Activated CD4-positive, alpha-beta T cell treated with anti-CD3 and anti-CD28 coated beads for 36 hours (primary cell): ENCODE measurements at regions of chr17 and their contacts with region 1.

Region 1: GRCh38 chr17:30291543-30292285 is at the start of gene BLMH:
- DNase-seq: peak; percentile 90
- ATAC-seq: peak; percentile 82
- H3K4me3 Mint-ChIP-seq: peak within 1 kb of the TSS; percentile 91
- H3K27ac Mint-ChIP-seq: peak within 1 kb of the TSS; percentile 94
- H3K4me1 Mint-ChIP-seq: peaks cover 13% of the 10 kb centered on the region
- H3K27me3 Mint-ChIP-seq: no peaks in the 10 kb centered on the region
- total RNA-seq, gene BLMH: 54.3 to 74.5 TPM

Region 2: DNA sequence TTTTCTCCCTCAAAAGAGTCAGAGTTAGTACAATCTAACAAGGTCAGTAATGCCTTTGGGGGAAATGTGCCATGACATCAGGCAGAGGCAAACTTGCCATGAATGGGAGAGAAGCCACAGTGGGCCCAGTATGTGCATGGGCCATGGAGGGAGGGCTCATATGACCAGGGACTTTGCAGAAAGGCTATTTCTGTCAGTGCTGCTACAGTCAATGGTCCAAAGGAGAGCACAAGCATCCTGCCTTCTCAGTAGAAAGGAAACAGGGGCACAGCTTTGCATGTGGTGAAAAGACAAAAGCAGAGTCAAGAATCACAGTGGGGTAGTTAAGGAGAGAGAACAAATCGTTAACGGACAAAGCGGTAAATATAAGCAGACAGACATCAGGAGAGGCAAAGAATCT is 657.8 kb before region 1 on chr17:
- CTCF ChIA-PET with region 1: no interaction called
- POLR2A ChIA-PET with region 1: no interaction called
- intact Hi-C with region 1: no loop called
- DNase-seq: no peak
- ATAC-seq: no peak
- H3K4me3 Mint-ChIP-seq: no peak overlapping the region
- H3K27ac Mint-ChIP-seq: peak overlapping the region; percentile 45
- H3K4me1 Mint-ChIP-seq: peaks cover 16% of the 10 kb centered on the region
- H3K27me3 Mint-ChIP-seq: no peaks in the 10 kb centered on the region

Region 3: GRCh38 chr17:30252940-30253717 is 38.6 kb before region 1 on chr17:
- CTCF ChIA-PET with region 1: no interaction called
- POLR2A ChIA-PET with region 1: no interaction called
- intact Hi-C with region 1: no loop called
- DNase-seq: no peak
- ATAC-seq: no peak
- H3K4me3 Mint-ChIP-seq: no peak overlapping the region
- H3K27ac Mint-ChIP-seq: no peak overlapping the region
- H3K4me1 Mint-ChIP-seq: no peaks in the 10 kb centered on the region
- H3K27me3 Mint-ChIP-seq: no peaks in the 10 kb centered on the region

Region 4: GRCh38 chr17:30323895-30324319 is 32.2 kb after region 1 on chr17:
- CTCF ChIA-PET with region 1: interaction called, 6 read pairs
- POLR2A ChIA-PET with region 1: interaction called, 3 read pairs
- intact Hi-C with region 1: loop called in 1 of 2 experiments (anchors 2 kb)
- DNase-seq: peak; percentile 72
- ATAC-seq: peak; percentile 99
- H3K4me3 Mint-ChIP-seq: no peak overlapping the region
- H3K27ac Mint-ChIP-seq: peak overlapping the region; percentile 79
- H3K4me1 Mint-ChIP-seq: peaks cover 27% of the 10 kb centered on the region
- H3K27me3 Mint-ChIP-seq: no peaks in the 10 kb centered on the region

Region 5: DNA sequence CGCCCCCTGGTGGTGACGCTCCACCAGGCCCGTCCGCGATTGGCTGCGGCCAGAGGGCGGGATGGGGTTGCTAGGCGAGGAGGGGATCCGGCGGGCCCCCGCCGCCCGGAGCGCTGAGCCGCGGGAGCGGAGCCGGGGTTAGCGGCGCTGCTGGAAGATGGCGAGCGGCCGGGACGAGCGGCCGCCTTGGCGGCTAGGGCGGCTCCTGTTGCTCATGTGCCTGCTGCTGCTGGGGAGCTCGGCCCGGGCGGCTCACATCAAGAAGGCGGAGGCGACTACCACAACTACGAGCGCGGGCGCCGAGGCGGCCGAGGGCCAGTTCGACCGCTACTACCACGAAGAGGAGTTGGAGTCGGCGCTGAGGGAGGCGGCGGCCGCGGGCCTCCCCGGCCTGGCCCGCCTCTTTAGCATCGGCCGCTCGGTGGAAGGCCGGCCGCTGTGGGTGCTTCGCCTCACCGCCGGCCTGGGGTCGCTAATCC is 87.1 kb after region 1 on chr17 and contains the start of gene CPD:
- CTCF ChIA-PET with region 1: interaction called, 3 read pairs
- POLR2A ChIA-PET with region 1: interaction called, 5 read pairs
- intact Hi-C with region 1: loop called (anchors 5 kb)
- DNase-seq: peak; percentile 98
- ATAC-seq: peak; percentile 87
- H3K4me3 Mint-ChIP-seq: peak within 1 kb of the TSS; percentile 82
- H3K27ac Mint-ChIP-seq: peak within 1 kb of the TSS; percentile 80
- H3K4me1 Mint-ChIP-seq: peaks cover 63% of the 10 kb centered on the region
- H3K27me3 Mint-ChIP-seq: no peaks in the 10 kb centered on the region
- total RNA-seq, gene CPD: 29.0 to 36.3 TPM

Region 6: DNA sequence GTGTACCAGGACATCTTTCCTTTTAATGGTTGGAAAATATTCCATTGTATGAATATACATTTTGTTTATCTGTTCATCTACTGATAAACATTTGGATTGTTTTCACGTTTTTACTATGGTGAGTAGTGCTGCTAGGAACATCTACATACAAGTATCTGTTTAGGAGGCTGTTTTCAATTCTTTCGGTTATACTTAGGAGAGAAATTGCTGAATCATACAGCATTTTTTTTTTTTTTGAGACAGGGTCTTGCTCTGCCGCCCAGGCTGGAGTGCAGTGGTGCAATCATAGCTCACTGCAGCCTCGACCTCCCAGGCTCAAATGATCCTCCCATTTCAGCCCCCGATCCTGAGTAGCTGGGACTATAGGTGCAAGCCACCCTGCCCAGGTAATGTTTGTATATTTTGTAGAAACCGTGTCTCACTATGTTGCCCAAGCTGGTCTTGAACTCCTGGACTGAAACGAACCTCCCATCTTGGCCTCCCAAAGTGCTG is 409.8 kb after region 1 on chr17:
- CTCF ChIA-PET with region 1: no interaction called
- POLR2A ChIA-PET with region 1: no interaction called
- intact Hi-C with region 1: loop called in 1 of 2 experiments (anchors 5 kb)
- DNase-seq: no peak
- ATAC-seq: no peak
- H3K4me3 Mint-ChIP-seq: no peak overlapping the region
- H3K27ac Mint-ChIP-seq: no peak overlapping the region
- H3K4me1 Mint-ChIP-seq: peaks cover 8% of the 10 kb centered on the region
- H3K27me3 Mint-ChIP-seq: peaks cover 22% of the 10 kb centered on the region

Region 7: GRCh38 chr17:30831663-30832437 is 540.1 kb after region 1 on chr17 and contains the start of gene ATAD5:
- CTCF ChIA-PET with region 1: no interaction called
- POLR2A ChIA-PET with region 1: no interaction called
- intact Hi-C with region 1: loop called in 1 of 2 experiments (anchors 5 kb)
- DNase-seq: peak; percentile 94
- ATAC-seq: peak; percentile 92
- H3K4me3 Mint-ChIP-seq: peak within 1 kb of the TSS; percentile 99
- H3K27ac Mint-ChIP-seq: peak within 1 kb of the TSS; percentile 94
- H3K4me1 Mint-ChIP-seq: peaks cover 31% of the 10 kb centered on the region
- H3K27me3 Mint-ChIP-seq: no peaks in the 10 kb centered on the region
- total RNA-seq, gene ATAD5: 33.1 to 40.8 TPM